ENCODE measurements at regions of chr22 and their contacts with region 1.

Region 1: DNA sequence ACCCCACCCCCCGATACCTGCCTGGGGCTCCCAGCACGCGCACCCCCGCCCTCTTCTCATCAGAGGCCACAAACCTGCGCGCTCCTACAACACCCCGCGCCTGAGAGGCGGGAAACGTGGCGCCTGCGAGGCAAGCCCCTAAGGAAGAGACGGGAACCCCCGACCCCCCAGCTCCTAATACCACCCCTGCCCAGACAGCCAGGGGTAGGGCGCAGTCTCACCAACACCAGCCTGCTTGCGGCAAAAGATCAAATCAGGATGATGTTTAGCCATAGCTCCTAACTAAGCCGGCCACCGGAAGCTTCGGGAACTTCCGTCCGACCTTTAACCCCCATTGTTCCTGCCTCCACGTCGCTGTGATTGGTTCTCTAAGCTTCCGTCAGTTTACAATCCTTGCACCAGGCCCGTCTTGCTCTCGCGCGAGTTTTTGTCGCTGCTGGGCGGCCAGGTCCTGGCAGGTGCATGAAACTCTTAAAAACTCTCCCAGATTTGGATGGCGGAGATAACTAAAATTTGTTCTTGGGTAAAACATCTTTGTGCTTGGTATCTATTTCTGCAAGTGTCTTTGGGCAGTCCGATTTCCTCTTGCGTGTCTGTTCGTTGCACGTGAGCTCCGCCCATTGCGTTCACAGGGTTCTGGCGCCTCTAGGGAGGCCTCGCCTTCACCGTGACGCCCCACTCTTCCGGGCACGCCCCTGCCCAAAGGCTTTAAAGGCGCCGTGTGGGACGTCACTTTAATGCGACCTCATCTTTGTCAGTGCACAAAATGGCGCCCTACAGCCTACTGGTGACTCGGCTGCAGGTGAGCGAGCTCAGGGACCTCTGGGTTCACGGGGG is at the starts of genes ACO2 and PHF5A:
- DNase-seq: peak; percentile 99
- ATAC-seq: peak; percentile 92
- H3K4me3 Mint-ChIP-seq: peak within 1 kb of the TSS; percentile 89
- H3K27ac Mint-ChIP-seq: peak within 1 kb of the TSS; percentile 98
- H3K4me1 Mint-ChIP-seq: peaks cover 53% of the 10 kb centered on the region
- H3K27me3 Mint-ChIP-seq: no peaks in the 10 kb centered on the region
- total RNA-seq, gene ACO2: 91.8 to 97.1 TPM
- total RNA-seq, gene PHF5A: 58.8 to 62.1 TPM

Region 2: GRCh38 chr22:41240377-41241132 is 228.0 kb before region 1 on chr22 and contains the start of gene CHADL:
- CTCF ChIA-PET with region 1: no interaction called
- POLR2A ChIA-PET with region 1: no interaction called
- DNase-seq: no peak
- ATAC-seq: no peak
- H3K4me3 Mint-ChIP-seq: no peak within 1 kb of the TSS
- H3K27ac Mint-ChIP-seq: no peak within 1 kb of the TSS
- H3K4me1 Mint-ChIP-seq: peaks cover 6% of the 10 kb centered on the region
- H3K27me3 Mint-ChIP-seq: no peaks in the 10 kb centered on the region
- total RNA-seq, gene CHADL: 0.37 to 1.0 TPM

Region 3: GRCh38 chr22:41280066-41280465 is 188.5 kb before region 1 on chr22:
- CTCF ChIA-PET with region 1: no interaction called
- POLR2A ChIA-PET with region 1: no interaction called
- DNase-seq: no peak
- ATAC-seq: no peak
- H3K4me3 Mint-ChIP-seq: no peak overlapping the region
- H3K27ac Mint-ChIP-seq: no peak overlapping the region
- H3K4me1 Mint-ChIP-seq: peaks cover 22% of the 10 kb centered on the region
- H3K27me3 Mint-ChIP-seq: no peaks in the 10 kb centered on the region

Region 4: DNA sequence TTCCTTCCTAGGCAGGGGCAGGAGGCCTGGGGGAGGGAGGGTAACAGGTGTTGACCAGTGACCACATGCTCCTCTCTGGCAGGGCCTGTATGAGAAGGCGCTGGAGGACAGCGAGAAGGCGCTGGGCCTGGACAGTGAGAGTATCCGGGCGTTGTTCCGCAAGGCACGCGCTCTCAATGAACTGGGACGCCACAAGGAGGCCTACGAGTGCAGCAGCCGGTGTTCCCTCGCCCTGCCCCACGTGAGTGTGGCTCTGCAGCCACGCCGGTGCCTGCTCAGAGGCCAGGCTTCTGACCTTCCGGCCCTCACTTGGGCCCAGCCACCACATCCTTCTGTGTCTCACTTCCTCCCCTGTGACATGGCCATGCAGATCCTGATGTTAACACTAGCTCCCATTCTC is 141.5 kb before region 1 on chr22:
- CTCF ChIA-PET with region 1: no interaction called
- POLR2A ChIA-PET with region 1: no interaction called
- DNase-seq: no peak
- ATAC-seq: no peak
- H3K4me3 Mint-ChIP-seq: no peak overlapping the region
- H3K27ac Mint-ChIP-seq: no peak overlapping the region
- H3K4me1 Mint-ChIP-seq: no peaks in the 10 kb centered on the region
- H3K27me3 Mint-ChIP-seq: no peaks in the 10 kb centered on the region

Region 5: GRCh38 chr22:41381329-41382097 is 87.1 kb before region 1 on chr22 and contains the start of gene TEF:
- CTCF ChIA-PET with region 1: no interaction called
- POLR2A ChIA-PET with region 1: interaction called, 12 read pairs
- DNase-seq: peak; percentile 98
- ATAC-seq: peak; percentile 93
- H3K4me3 Mint-ChIP-seq: peak within 1 kb of the TSS; percentile 87
- H3K27ac Mint-ChIP-seq: peak within 1 kb of the TSS; percentile 96
- H3K4me1 Mint-ChIP-seq: peaks cover 17% of the 10 kb centered on the region
- H3K27me3 Mint-ChIP-seq: peaks cover 6% of the 10 kb centered on the region
- total RNA-seq, gene TEF: 2.9 to 3.0 TPM

Region 6: DNA sequence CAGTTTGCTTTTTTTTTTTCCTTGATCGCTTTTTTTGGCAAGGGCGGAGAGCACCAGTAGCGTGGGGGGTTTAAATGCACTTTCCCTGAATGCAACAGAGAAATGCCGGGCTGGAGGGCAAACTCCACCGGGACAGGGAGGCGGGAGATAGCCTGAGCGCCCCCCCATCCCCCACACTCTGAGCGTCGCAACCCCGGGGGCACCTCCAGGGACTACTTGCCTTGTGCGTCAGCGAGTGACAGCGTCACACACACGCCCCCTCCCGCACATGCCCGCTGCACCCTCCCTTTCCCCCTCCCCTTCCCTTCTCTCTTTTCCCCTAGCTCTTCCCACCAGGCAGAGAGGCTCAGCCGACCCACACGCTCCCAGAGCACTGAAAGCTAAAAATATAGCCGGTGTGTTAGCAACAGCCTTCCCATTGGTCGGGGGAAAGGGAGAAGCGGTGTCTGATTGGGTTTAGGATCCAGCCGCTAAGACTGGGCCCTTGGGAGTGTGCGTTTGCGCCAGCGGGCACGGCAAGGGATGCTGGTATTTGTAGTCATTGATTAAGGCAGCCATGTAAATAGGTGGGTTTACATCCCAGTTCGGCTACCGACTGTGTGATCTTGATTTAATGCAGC is 20.3 kb before region 1 on chr22:
- CTCF ChIA-PET with region 1: interaction called, 9 read pairs
- POLR2A ChIA-PET with region 1: interaction called, 218 read pairs
- DNase-seq: peak; percentile 96
- ATAC-seq: peak; percentile 71
- H3K4me3 Mint-ChIP-seq: peak overlapping the region; percentile 90
- H3K27ac Mint-ChIP-seq: peak overlapping the region; percentile 100
- H3K4me1 Mint-ChIP-seq: peaks cover 12% of the 10 kb centered on the region
- H3K27me3 Mint-ChIP-seq: no peaks in the 10 kb centered on the region

Region 7: DNA sequence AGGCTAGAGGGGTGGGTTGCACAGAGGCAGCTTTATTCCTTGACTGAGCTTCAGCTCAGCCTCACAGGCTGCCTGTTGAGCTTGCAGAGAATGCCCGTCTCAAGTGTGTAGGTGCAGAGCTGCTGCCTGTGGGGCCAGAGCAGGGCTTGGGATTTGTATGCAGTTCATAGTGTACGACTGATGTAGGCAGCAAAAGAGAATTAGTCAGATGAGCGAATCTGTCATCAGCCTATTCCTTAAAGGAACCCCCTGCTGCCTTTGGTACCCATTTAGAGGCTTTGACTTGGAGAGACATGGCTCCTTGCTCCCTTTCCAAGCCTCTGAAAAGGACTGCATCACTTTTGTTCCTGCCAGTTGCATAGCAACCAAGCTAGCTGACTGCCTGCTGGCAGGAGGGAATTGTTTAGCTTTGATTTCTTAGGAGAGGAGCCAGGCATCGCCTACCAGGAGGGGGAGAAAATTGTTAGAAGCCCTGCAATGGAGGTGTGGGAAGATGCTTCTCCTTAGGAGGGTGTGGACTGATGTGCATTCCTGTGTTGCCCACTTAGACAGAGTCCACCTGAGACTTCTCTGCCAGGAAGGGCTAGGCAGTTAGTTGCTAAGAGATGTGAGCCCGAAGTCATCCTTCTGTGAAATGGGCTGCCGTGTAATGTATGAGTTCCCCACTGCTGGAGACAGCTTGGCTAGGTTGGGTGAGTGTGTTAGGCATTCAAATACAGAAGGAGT is 11.2 kb after region 1 on chr22:
- CTCF ChIA-PET with region 1: interaction called, 3 read pairs
- POLR2A ChIA-PET with region 1: interaction called, 25 read pairs
- DNase-seq: no peak
- ATAC-seq: no peak
- H3K4me3 Mint-ChIP-seq: no peak overlapping the region
- H3K27ac Mint-ChIP-seq: no peak overlapping the region
- H3K4me1 Mint-ChIP-seq: peaks cover 12% of the 10 kb centered on the region
- H3K27me3 Mint-ChIP-seq: no peaks in the 10 kb centered on the region

Region 8: DNA sequence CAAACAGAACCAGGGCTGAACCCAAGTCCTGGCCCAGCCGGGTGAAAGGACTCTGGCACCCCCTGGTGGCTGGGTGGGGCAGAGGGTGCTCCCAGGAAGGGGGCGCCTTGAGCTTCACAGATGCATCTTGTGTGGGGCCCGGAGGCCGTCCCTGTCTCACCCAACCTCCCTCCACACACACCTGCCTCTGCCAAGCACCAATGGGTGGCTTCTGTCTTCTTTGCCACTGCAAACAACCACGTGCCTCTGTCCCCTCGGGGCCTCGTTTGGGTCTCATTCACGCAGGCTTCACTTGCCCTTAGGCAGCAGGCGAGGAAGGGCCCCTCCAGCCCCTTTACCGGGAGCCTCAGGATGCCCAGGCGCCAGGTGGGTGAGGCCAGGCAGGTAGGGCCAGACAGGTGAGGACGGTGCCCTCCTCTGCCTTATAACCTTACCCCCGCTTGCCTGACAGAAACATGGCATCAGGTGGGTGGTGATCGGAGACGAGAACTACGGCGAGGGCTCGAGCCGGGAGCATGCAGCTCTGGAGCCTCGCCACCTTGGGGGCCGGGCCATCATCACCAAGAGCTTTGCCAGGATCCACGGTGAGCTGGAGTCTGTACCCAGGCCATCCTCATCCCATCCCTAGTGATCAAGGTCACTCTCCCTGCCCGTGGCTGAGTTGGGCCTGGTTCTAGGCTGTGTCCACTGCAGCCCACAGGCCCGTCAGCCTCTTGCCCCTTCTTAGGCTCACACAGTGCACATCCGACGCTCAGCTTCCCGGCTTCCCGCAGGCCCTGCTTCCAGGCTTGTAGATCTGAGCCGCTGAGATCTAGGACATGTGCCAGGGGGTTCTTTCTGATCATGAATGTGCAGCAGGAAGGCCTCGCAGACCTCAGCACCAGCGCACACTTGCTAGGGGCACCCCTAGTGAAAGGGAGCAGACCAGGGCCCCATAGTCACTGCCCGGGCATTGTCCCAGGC is 58.5 kb after region 1 on chr22:
- CTCF ChIA-PET with region 1: interaction called, 11 read pairs
- POLR2A ChIA-PET with region 1: interaction called, 5 read pairs
- DNase-seq: peak; percentile 71
- ATAC-seq: peak; percentile 74
- H3K4me3 Mint-ChIP-seq: no peak overlapping the region
- H3K27ac Mint-ChIP-seq: peak overlapping the region; percentile 60
- H3K4me1 Mint-ChIP-seq: peaks cover 13% of the 10 kb centered on the region
- H3K27me3 Mint-ChIP-seq: no peaks in the 10 kb centered on the region

Region 9: GRCh38 chr22:41621099-41621910 is 152.7 kb after region 1 on chr22 and contains the start of gene XRCC6:
- CTCF ChIA-PET with region 1: no interaction called
- POLR2A ChIA-PET with region 1: interaction called, 15 read pairs
- DNase-seq: peak; percentile 100
- ATAC-seq: peak; percentile 92
- H3K4me3 Mint-ChIP-seq: peak within 1 kb of the TSS; percentile 96
- H3K27ac Mint-ChIP-seq: peak within 1 kb of the TSS; percentile 98
- H3K4me1 Mint-ChIP-seq: peaks cover 46% of the 10 kb centered on the region
- H3K27me3 Mint-ChIP-seq: no peaks in the 10 kb centered on the region
- total RNA-seq, gene XRCC6: 302 to 308 TPM

Measured in activated CD8-positive, alpha-beta T cell treated with anti-CD3 and anti-CD28 coated beads, Interleukin-2, amount 10 ng/mL, durations not matched to agents 7 days and 5 days (primary cell).